Naive thymus-derived CD4-positive, alpha-beta T cell (primary cell): ENCODE measurements at regions of chr6 and their contacts with region 1.

Region 1: DNA sequence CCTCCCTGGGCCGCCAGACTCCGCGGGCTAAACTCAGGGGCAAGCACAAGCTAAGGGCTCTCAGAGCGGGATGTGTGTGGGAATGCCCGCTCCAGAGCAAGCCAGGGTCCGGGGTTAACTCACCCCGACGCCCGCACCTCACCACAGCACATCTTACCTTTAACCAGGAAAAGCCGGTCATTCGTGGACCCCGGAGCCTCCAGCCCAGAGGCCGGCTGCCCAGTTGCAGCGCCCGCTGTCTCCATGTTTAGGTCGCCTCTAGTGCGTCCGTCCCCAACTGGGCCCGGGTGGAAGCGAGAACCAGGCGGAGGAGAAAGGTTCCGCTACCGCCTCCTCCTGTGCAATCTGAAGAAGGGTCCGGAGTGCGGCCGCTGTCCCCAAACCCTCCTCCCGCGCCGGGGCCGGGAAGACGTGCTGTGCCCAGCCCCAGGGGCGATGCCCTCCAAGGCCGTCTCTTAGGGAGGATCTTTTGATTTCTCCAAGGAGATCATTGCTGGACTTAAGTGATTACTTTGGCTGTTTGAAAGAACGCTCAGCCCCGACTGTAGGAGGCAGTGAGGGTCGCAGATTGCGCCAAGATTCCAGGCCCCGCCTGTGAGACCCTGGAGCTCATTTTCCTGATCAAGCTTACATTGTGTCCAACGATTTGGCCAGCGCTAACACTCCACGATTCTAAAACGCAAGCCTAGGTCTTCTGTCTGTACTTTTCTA is at the start of gene TMEM242:
- DNase-seq: peak; percentile 68 to 93 (median 81)
- ATAC-seq: peak; percentile 98
- H3K4me3 ChIP-seq: peak within 1 kb of the TSS; percentile 95
- H3K4me3 Mint-ChIP-seq: peak within 1 kb of the TSS; percentile 93 to 99 (median 95)
- H3K27ac ChIP-seq: peak within 1 kb of the TSS; percentile 76
- H3K27ac Mint-ChIP-seq: peak within 1 kb of the TSS; percentile 78 to 93 (median 92)
- H3K4me1 ChIP-seq: peaks cover 8 to 12% of the 10 kb centered on the region in 2 donors
- H3K4me1 Mint-ChIP-seq: peaks cover 10 to 47% (median 24%) of the 10 kb centered on the region in 7 donors
- H3K27me3 ChIP-seq: no peaks in the 10 kb centered on the region
- H3K27me3 Mint-ChIP-seq: peaks cover 0 to 30% (median 10%) of the 10 kb centered on the region in 5 donors
- total RNA-seq, gene TMEM242: 11.6 to 15.6 (median 13.2) TPM

Region 2: DNA sequence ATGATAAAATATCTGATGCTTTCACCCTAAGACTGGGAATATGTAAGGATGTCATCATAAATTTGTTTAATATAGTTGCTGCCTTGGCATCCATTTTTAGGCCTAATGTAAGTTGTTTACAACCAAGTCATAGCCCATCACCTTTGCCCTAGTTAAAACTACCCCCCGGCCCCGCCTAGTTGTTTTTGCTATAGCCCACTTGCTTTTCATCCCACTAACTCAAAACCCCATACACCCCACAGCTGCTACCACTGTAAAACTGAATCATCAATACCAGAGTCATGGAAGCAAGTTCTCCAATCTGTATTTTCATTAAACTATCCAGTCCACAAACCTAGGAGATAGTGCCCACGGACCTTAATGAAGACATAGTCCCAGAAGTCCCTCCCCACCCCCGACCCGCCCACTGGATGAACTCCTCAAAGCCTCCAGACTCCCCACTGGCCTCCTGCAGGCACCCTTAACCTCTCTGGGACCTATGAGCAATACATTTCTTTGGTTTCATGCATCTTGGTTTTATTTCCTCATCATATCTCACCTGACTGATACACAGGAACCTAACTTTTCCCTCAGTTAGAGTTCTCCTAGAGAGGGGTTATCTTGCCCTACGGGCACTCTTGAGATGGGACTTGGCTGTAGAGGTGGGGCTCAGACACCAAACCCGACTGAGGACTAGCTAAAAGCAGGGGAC is 45.1 kb after region 1 on chr6:
- CTCF ChIA-PET with region 1: no interaction called
- POLR2A ChIA-PET with region 1: no interaction called
- intact Hi-C with region 1: loop called in 1 of 2 experiments (anchors 5 kb)
- DNase-seq: no peak
- ATAC-seq: no peak
- H3K4me3 ChIP-seq: no peak overlapping the region
- H3K4me3 Mint-ChIP-seq: no peak overlapping the region
- H3K27ac ChIP-seq: no peak overlapping the region
- H3K27ac Mint-ChIP-seq: no peak overlapping the region
- H3K4me1 ChIP-seq: peaks cover 4 to 17% of the 10 kb centered on the region in 2 donors
- H3K4me1 Mint-ChIP-seq: peaks cover 11 to 20% (median 18%) of the 10 kb centered on the region in 7 donors
- H3K27me3 ChIP-seq: peaks cover 0 to 14% of the 10 kb centered on the region in 2 donors
- H3K27me3 Mint-ChIP-seq: peaks cover 21 to 65% (median 36%) of the 10 kb centered on the region in 5 donors

Region 3: DNA sequence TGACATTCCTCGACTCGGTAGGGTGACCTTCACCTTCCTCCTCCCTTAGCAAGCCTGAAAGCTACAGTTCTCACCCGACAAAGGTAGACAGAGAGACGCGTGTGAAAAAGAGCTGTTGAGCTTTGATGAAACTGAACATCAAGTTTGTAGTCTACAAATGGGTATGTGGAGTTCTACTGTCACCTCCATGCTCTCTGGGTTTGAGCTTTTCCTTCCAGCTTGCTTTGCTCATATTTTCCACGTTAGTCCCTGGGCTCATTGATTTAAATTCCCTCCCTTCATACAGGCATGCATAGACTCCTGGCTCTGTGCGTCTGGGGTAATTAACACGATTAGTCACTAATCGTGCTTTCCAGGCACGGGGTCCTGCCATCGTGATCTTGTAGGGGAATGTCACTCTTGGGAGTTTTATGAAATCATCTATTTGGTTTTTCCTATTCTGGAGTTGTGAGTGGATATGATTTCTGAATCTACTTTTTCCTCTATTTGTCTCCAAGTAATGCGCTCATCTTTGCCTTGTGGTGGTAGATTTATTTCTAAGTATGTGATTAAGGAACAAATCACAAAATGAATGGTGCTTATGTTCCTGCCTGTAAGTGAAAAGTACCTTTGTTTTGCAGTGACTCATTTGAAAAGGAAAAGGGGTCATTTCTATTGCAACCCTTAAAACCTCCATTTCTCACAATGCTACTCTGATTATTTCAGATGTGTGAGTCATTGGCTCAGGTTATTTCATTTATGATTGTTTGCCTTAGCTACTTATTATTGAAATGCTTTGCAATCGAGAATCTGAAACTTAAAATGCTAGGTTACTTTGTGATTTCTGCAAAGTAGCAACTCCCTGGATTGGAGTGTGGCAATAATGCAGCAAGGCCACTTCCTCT is 212.2 kb after region 1 on chr6:
- CTCF ChIA-PET with region 1: no interaction called
- POLR2A ChIA-PET with region 1: no interaction called
- intact Hi-C with region 1: loop called (anchors 5 to 10 kb)
- DNase-seq: peak in 1 of 9 donors; percentile 22
- ATAC-seq: peak; percentile 60
- H3K4me3 ChIP-seq: no peak overlapping the region
- H3K4me3 Mint-ChIP-seq: peak overlapping the region in 9 of 10 donors; percentile 25 to 76 (median 51)
- H3K27ac ChIP-seq: no peak overlapping the region
- H3K27ac Mint-ChIP-seq: peak overlapping the region; percentile 1 to 87 (median 45)
- H3K4me1 ChIP-seq: peaks cover 11 to 45% of the 10 kb centered on the region in 2 donors
- H3K4me1 Mint-ChIP-seq: peaks cover 22 to 61% (median 35%) of the 10 kb centered on the region in 7 donors
- H3K27me3 ChIP-seq: no peaks in the 10 kb centered on the region
- H3K27me3 Mint-ChIP-seq: no peaks in the 10 kb centered on the region